Activated CD4-positive, alpha-beta memory T cell treated with anti-CD3 and anti-CD28 coated beads for 36 hours (primary cell): ENCODE measurements at regions of chr5 and their contacts with region 1.

Region 1: GRCh38 chr5:176979669-176980068 is 26.9 kb downstream of the UIMC1 start:
- DNase-seq: no peak
- H3K4me3 Mint-ChIP-seq: no peak overlapping the region
- H3K27ac Mint-ChIP-seq: no peak overlapping the region
- H3K4me1 Mint-ChIP-seq: peaks cover 13% of the 10 kb centered on the region
- H3K27me3 Mint-ChIP-seq: no peaks in the 10 kb centered on the region

Region 2: GRCh38 chr5:176846335-176847140 is 133.1 kb before region 1 on chr5:
- CTCF ChIA-PET with region 1: no interaction called
- POLR2A ChIA-PET with region 1: no interaction called
- intact Hi-C with region 1: no loop called
- DNase-seq: no peak
- H3K4me3 Mint-ChIP-seq: no peak overlapping the region
- H3K27ac Mint-ChIP-seq: no peak overlapping the region
- H3K4me1 Mint-ChIP-seq: no peaks in the 10 kb centered on the region
- H3K27me3 Mint-ChIP-seq: peaks cover 29% of the 10 kb centered on the region

Region 3: GRCh38 chr5:177040814-177041420 is 61.2 kb after region 1 on chr5:
- CTCF ChIA-PET with region 1: no interaction called
- POLR2A ChIA-PET with region 1: no interaction called
- intact Hi-C with region 1: loop called (anchors 5 kb)
- DNase-seq: no peak
- H3K4me3 Mint-ChIP-seq: no peak overlapping the region
- H3K27ac Mint-ChIP-seq: no peak overlapping the region
- H3K4me1 Mint-ChIP-seq: peaks cover 15% of the 10 kb centered on the region
- H3K27me3 Mint-ChIP-seq: no peaks in the 10 kb centered on the region